Activated CD4-positive, alpha-beta T cell treated with anti-CD3 and anti-CD28 coated beads, Interleukin-2, amount 10 ng/mL, durations not matched to agents 24 days and 14 days (primary cell): ENCODE measurements at regions of chr16 and their contacts with region 1.

Region 1: DNA sequence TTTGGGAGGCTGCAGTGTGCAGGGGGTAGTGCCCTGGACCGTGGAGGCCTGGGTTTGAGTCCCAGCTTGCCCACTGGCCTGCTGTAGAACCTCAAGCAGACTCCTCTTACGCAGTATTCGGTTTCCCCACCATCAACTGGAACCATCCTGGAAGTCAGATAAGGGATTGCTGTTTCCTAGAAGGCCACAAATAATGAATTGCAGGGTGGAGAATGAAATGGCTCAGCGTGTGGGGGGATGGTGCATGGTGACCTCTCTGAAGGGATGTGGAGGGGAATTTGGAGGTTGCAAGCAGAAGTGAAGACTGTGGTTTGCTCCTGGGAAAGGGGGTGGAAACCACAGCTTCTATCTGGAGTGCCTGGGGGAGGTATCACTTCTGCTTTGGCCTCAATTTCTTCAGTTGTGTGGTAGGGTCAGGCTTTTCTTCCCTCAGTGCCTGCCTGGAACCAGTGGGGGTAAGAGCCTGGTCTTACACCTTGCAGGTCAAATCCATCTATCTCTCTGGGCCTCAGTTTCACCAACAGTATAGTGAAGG is 1.7 kb downstream of the ADGRG5 start:
- DNase-seq: peak; percentile 68
- H3K4me3 Mint-ChIP-seq: peak overlapping the region; percentile 53
- H3K27ac Mint-ChIP-seq: peak overlapping the region; percentile 13
- H3K4me1 Mint-ChIP-seq: peaks cover 41% of the 10 kb centered on the region
- H3K27me3 Mint-ChIP-seq: no peaks in the 10 kb centered on the region

Region 2: GRCh38 chr16:56980792-56981724 is 563.1 kb before region 1 on chr16:
- intact Hi-C with region 1: no loop called
- DNase-seq: no peak
- H3K4me3 Mint-ChIP-seq: no peak overlapping the region
- H3K27ac Mint-ChIP-seq: peak overlapping the region; percentile 75
- H3K4me1 Mint-ChIP-seq: peaks cover 52% of the 10 kb centered on the region
- H3K27me3 Mint-ChIP-seq: no peaks in the 10 kb centered on the region

Region 3: DNA sequence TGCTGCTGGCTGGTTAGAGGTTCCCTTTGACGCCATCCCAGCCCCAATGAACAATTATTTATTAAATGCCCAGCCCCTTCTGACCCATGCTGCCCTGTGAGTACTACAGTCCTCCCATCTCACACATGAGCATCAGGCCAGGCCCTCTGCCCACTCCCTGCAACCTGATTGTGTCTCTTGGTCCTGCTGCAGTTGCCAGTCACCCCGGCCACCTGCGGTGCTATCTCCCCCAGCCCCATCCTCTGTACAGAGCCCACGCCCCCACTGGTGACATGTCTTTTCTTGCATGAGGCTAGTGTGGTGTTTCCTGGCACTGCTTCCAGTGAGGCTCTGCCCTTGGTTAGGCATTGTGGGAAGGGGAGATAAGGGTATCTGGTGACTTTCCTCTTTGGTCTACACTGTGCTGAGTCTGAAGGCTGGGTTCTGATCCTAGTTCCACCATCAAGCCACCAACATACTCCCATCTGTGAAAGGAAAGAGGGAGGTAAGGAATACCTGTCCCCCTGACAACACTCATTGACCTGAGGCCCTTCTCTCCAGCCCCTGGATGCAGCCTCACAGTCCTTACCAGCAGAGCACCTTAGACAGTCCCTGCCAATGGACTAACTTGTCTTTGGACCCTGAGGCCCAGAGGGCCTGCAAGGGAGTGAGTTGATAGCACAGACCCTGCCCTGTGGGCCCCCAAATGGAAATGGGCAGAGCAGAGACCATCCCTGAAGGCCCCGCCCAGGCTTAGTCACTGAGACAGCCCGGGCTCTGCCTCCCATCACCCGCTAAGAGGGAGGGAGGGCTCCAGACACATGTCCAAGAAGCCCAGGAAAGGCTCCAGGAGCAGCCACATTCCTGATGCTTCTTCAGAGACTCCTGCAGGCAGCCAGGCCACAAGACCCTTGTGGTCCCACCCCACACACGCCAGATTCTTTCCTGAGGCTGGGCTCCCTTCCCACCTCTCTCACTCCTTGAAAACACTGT is 160.6 kb before region 1 on chr16:
- intact Hi-C with region 1: no loop called
- DNase-seq: no peak
- H3K4me3 Mint-ChIP-seq: no peak overlapping the region
- H3K27ac Mint-ChIP-seq: no peak overlapping the region
- H3K4me1 Mint-ChIP-seq: no peaks in the 10 kb centered on the region
- H3K27me3 Mint-ChIP-seq: peaks cover 2% of the 10 kb centered on the region

Region 4: DNA sequence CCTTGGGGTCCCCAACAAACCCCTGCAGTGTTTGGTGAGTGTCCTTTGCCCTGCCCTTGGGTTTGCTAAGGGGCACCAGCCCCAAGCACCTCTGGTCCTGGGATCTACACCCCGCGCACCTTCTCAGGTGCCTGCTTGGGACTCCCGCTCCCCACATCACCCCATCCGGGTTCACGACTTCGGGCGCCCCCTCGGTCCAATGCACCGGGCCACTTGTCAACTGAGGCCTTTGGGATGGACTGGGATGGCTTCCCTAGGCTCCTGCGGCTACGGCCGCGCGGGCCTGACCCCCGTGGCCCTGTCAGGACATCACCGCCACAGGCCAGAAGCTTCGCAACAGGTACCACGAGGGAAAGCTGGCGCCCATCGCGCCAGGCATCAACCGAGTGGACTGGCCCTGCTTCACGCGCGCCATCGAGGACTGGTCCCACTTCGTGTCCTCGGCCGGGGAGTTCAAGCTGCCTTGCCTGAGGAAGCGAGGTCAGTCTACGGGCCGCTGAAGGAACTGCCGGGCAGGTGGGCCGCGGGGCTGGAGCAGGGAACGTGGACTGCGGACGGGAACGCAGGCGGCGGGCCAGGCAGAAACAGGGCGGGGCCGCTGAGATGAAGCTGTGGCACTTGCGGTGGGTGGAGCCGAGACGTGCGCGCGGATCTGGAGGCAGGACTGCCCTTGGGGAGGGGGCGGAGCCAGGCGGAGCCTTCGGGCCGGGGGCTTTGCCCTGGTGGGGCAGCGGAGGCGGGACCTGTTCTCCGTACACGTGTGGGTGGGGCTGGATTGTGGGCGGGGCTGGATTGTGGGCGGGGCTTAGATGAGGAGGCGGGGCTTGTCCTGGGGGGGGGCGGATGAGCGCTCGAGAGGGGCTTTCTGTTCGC is 440.4 kb after region 1 on chr16:
- intact Hi-C with region 1: loop called (anchors 5 kb)
- DNase-seq: peak; percentile 97
- H3K4me3 Mint-ChIP-seq: peak overlapping the region; percentile 91
- H3K27ac Mint-ChIP-seq: peak overlapping the region; percentile 65
- H3K4me1 Mint-ChIP-seq: peaks cover 8% of the 10 kb centered on the region
- H3K27me3 Mint-ChIP-seq: peaks cover 13% of the 10 kb centered on the region